ENCODE measurements at regions of chr2 and their contacts with region 1.

Region 1: DNA sequence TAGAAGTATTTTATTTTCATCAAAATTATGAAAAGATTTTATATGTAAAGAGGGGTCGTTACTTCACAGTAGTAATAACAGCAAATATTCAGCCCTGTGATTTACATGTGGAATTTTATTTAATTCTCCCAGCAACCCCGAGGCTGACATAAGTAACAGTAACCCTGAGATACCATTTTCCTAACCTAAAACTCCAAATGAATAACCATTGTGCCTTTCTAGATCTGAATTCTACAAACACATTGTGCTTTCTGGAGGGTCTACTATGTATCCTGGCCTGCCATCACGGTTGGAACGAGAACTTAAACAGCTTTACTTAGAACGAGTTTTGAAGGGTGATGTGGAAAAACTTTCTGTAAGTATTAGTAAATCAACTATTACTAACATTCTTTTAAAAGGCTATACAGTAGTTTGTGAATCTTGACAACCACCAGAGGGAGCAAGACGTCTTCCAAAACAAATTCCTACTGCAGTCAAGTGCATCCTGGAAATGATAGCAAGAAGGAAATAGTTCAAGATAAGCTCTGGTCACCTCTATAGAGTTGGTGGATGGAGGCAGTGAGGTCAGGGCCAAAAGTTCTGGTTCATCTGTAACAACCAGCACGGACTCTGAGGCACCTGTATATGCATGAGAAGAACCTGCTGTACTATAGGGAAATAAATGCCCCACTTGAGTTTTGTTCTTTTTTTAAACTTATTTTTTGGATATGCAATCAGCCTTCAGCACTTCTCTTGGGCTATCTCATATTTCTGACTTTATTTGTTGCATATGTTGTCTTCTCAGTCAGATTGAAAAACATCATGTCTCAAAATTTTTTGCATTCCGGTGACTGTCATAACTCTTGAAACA is 37.4 kb downstream of the ACTR2 start:
- DNase-seq: peak in 4 of 14 experiments; percentile 35 to 66 (median 51)
- ATAC-seq: no peak
- H3K4me3 ChIP-seq: no peak overlapping the region
- H3K4me3 Mint-ChIP-seq: no peak overlapping the region
- H3K27ac ChIP-seq: no peak overlapping the region
- H3K27ac Mint-ChIP-seq: peak overlapping the region; percentile 10
- H3K4me1 ChIP-seq: no peaks in the 10 kb centered on the region
- H3K4me1 Mint-ChIP-seq: peaks cover 7% of the 10 kb centered on the region
- H3K27me3 ChIP-seq: no peaks in the 10 kb centered on the region
- H3K27me3 Mint-ChIP-seq: no peaks in the 10 kb centered on the region
- CTCF ChIP-seq: peak; percentile 75

Region 2: DNA sequence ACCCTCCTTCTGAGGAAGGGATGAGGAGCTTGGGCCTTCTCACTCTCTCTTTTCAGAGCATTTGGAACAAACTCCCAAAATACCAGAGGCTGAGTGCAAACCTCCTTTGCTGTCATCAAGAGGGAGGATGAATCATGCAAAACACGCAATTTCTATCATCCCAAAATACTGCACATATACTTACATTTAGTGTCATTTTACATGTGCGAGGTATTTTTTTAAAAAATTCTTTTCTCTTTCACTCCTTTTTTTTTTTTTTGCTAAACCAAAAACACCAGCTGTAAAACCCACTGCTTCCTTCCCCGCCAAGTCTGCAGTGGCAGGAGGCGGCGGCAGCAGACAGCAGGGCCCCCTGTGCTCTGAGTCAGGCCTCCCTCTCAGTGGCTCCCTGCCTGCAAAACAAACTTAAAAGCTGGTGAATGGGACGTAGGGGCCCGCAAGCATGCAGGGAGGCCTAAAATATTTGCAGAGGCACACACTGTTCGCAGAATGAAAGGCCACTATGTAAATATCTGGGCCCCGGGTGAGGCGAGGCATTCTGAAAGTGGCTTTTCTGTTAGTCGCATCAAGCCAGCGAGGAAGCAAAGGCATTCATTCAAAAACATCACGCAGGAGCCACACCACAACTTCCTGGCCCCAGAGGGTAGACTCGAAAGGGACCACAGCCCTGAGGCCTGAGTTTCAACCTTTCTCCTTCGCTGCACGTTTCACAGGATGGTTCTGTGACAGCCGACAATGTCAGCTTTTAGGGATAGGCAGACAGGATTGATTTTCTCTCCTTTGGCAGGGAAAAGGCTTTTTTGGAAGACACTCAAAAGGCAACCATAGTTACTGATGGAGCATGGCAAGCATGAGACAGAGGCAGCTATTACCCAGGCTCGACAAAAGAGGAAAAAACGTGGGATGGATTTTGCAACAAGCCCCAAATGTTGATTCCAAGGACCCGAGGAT is 36.0 kb after region 1 on chr2:
- CTCF ChIA-PET with region 1: no interaction called
- POLR2A ChIA-PET with region 1: interaction called, 4 read pairs
- intact Hi-C with region 1: loop called in 1 of 2 experiments (anchors 5 kb)
- DNase-seq: peak; percentile 40 to 80 (median 70)
- ATAC-seq: peak; percentile 93
- H3K4me3 ChIP-seq: peak overlapping the region; percentile 49
- H3K4me3 Mint-ChIP-seq: peak overlapping the region; percentile 85
- H3K27ac ChIP-seq: peak overlapping the region; percentile 21 to 52
- H3K27ac Mint-ChIP-seq: peak overlapping the region; percentile 90
- H3K4me1 ChIP-seq: peaks cover 27% of the 10 kb centered on the region
- H3K4me1 Mint-ChIP-seq: peaks cover 44% of the 10 kb centered on the region
- H3K27me3 ChIP-seq: no peaks in the 10 kb centered on the region
- H3K27me3 Mint-ChIP-seq: no peaks in the 10 kb centered on the region
- CTCF ChIP-seq: no peak

Region 3: DNA sequence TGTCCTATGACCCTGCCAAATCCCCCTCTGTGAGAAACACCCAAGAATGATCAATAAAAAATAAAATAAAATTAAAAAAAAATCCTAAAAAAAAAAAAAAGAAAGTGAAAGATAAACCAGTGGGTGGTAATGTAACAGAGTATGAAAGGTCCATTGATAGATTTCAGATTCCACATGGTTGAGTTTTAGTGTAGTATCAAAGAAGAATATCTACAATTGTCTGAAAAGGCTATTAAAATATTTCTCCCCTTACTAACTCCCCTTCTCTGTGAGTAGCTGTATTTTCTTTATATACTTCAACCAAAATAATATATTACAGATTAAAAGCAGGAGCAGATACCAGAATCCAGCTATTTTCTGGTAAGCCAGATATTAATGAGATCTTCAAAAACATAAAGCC is 74.6 kb after region 1 on chr2:
- CTCF ChIA-PET with region 1: no interaction called
- POLR2A ChIA-PET with region 1: no interaction called
- intact Hi-C with region 1: no loop called
- DNase-seq: no peak
- ATAC-seq: no peak
- H3K4me3 ChIP-seq: no peak overlapping the region
- H3K4me3 Mint-ChIP-seq: no peak overlapping the region
- H3K27ac ChIP-seq: no peak overlapping the region
- H3K27ac Mint-ChIP-seq: no peak overlapping the region
- H3K4me1 ChIP-seq: no peaks in the 10 kb centered on the region
- H3K4me1 Mint-ChIP-seq: no peaks in the 10 kb centered on the region
- H3K27me3 ChIP-seq: no peaks in the 10 kb centered on the region
- H3K27me3 Mint-ChIP-seq: no peaks in the 10 kb centered on the region
- CTCF ChIP-seq: no peak

Region 4: DNA sequence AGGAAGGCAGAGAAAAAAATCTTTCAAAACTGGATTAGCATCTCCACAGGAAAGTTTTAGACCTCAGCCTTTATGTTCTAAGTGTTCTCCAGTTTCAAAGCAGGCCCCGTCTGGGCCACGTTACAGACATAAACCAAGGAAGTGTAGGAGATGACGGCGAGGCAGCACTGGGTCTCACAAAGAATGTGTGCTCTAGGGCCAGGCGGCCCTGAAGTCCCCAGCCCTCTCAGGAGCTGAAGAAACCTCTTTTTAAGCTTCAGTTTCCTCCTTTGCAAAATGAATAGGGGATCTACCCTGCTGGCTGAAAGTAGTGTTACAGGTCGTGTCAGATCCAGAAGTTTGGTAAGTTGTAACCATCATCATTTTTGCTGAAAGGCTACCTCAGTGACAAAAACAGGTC is 85.6 kb after region 1 on chr2:
- CTCF ChIA-PET with region 1: no interaction called
- POLR2A ChIA-PET with region 1: no interaction called
- intact Hi-C with region 1: loop called in 1 of 2 experiments (anchors 1 kb)
- DNase-seq: peak in 1 of 14 experiments; percentile 14
- ATAC-seq: no peak
- H3K4me3 ChIP-seq: no peak overlapping the region
- H3K4me3 Mint-ChIP-seq: no peak overlapping the region
- H3K27ac ChIP-seq: no peak overlapping the region
- H3K27ac Mint-ChIP-seq: no peak overlapping the region
- H3K4me1 ChIP-seq: no peaks in the 10 kb centered on the region
- H3K4me1 Mint-ChIP-seq: peaks cover 7% of the 10 kb centered on the region
- H3K27me3 ChIP-seq: no peaks in the 10 kb centered on the region
- H3K27me3 Mint-ChIP-seq: no peaks in the 10 kb centered on the region
- CTCF ChIP-seq: no peak

Region 5: DNA sequence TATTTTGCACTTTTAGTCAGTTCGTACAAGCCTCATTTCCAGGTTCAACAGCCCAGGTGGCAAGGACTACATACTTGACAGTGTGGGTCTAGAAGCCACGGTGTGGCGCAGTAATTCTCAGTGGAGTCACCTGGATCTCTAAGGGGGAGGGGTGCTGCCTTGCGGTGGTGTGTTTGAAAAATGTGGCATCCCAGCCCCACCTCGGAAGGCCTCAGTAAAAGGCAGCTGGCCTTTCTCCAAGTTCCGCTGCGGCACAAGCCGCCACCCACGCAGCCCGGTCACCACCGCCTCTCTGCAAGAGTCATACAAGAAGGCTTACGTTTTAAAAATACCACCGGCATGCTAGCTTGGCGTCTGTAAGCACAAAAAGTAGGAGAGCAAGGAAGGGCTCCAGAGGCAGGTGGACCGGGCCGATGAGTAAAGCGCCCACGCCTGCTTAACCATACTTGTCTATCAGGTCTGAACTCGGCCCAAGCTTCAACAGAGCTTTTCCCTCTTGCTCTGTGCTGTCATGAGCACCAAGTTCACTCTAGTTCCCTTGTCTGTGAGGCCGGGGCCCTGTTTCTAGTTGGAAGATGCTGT is 117.8 kb after region 1 on chr2:
- CTCF ChIA-PET with region 1: no interaction called
- POLR2A ChIA-PET with region 1: no interaction called
- intact Hi-C with region 1: loop called in 1 of 2 experiments (anchors 2 kb)
- DNase-seq: peak; percentile 38 to 87 (median 64)
- ATAC-seq: peak; percentile 92
- H3K4me3 ChIP-seq: peak overlapping the region; percentile 20
- H3K4me3 Mint-ChIP-seq: peak overlapping the region; percentile 77
- H3K27ac ChIP-seq: no peak overlapping the region
- H3K27ac Mint-ChIP-seq: peak overlapping the region; percentile 82
- H3K4me1 ChIP-seq: peaks cover 25% of the 10 kb centered on the region
- H3K4me1 Mint-ChIP-seq: peaks cover 22% of the 10 kb centered on the region
- H3K27me3 ChIP-seq: no peaks in the 10 kb centered on the region
- H3K27me3 Mint-ChIP-seq: no peaks in the 10 kb centered on the region
- CTCF ChIP-seq: peak; percentile 39

Region 6: GRCh38 chr2:65432227-65433190 is 167.5 kb after region 1 on chr2 and contains the start of gene SPRED2:
- CTCF ChIA-PET with region 1: no interaction called
- POLR2A ChIA-PET with region 1: no interaction called
- intact Hi-C with region 1: loop called in 1 of 2 experiments (anchors 5 kb)
- DNase-seq: peak in 13 of 14 experiments; percentile 36 to 89 (median 60)
- ATAC-seq: peak; percentile 47
- H3K4me3 ChIP-seq: peak within 1 kb of the TSS; percentile 75
- H3K4me3 Mint-ChIP-seq: peak within 1 kb of the TSS; percentile 94
- H3K27ac ChIP-seq: no peak within 1 kb of the TSS
- H3K27ac Mint-ChIP-seq: peak within 1 kb of the TSS; percentile 42
- H3K4me1 ChIP-seq: peaks cover 49% of the 10 kb centered on the region
- H3K4me1 Mint-ChIP-seq: peaks cover 23% of the 10 kb centered on the region
- H3K27me3 ChIP-seq: peaks cover 29 to 34% of the 10 kb centered on the region in 2 experiments
- H3K27me3 Mint-ChIP-seq: peaks cover 57% of the 10 kb centered on the region
- CTCF ChIP-seq: no peak
- total RNA-seq, gene SPRED2: 2.5 to 2.8 TPM

Region 7: DNA sequence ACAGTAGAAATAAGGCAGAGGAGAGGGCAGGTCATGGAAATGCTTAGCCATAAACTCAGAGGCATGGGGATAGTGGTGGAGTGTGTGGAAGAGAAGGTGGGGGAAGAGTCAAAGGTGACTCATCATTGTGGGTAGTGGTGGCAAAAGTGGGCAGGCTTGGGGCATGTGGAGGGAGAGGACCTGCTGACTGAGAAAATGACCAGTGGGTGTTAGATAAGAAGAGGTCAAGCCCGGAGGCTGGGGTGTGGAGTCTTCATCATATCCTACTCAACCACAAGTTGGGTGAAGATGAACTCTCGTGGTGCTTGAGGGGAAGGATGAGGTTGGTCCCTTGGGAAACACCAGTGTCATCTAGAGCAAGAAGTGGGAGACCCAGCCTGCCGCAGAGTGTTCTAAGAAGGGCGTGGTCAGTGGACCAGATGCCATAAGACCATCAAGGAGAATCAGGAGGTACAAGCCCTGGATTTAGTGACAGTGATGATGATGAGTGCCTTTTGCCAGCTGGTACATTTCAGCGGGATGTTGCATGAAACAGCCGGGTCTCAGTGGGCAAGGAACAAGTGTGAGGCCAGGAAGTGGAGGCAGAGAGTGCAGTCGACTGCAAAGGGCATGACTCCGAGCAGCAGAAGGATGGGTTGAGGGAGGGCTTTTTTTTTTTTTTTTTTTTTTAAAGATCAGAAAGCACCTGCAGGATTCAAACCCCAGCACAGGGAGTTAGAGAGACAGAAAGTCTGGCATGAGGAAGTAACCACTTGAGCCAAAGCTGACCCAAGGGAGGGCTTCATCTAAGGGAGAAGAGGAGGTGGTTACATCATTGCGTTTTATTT is 289.9 kb after region 1 on chr2:
- CTCF ChIA-PET with region 1: no interaction called
- POLR2A ChIA-PET with region 1: no interaction called
- intact Hi-C with region 1: loop called (anchors 2 kb)
- DNase-seq: peak in 1 of 14 experiments; percentile 3
- ATAC-seq: no peak
- H3K4me3 ChIP-seq: no peak overlapping the region
- H3K4me3 Mint-ChIP-seq: no peak overlapping the region
- H3K27ac ChIP-seq: no peak overlapping the region
- H3K27ac Mint-ChIP-seq: no peak overlapping the region
- H3K4me1 ChIP-seq: peaks cover 4% of the 10 kb centered on the region
- H3K4me1 Mint-ChIP-seq: no peaks in the 10 kb centered on the region
- H3K27me3 ChIP-seq: no peaks in the 10 kb centered on the region
- H3K27me3 Mint-ChIP-seq: peaks cover 4% of the 10 kb centered on the region
- CTCF ChIP-seq: no peak

Region 8: DNA sequence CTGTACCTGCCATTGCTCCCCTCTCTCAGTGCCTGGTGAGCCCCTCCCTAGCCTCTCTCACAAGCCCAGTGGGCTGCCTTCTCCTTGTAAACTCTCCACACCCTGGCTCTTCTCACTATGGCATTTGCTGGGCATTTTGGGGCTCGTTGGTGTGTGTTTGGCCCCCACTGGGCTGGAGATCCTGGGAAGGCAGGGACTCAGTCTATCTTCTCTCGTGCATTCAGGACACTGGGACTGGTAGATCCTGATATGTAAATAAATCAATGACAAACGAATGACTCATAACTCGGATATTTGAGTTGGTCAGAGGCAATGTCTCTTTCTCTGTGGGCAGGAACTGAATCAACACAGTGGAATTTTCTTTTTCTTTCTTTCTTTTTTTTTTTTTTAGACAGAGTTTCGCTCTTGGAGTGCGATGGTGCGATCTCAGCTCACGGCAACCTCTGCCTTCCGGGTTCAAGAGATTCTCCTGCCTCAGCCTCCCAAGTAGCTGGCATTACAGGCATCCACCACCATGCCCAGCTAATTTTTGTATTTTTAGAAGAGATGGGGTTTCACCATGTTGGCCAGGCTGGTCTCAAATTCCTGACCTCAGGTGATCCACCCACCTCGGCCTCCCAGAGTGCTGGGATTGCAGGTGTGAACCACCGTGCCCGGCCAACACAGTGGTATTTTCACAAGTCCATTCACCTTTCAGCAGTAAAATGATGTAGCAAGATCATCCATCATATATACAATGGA is 312.0 kb after region 1 on chr2:
- CTCF ChIA-PET with region 1: no interaction called
- POLR2A ChIA-PET with region 1: no interaction called
- intact Hi-C with region 1: loop called (anchors 1 to 5 kb)
- DNase-seq: no peak
- ATAC-seq: no peak
- H3K4me3 ChIP-seq: no peak overlapping the region
- H3K4me3 Mint-ChIP-seq: no peak overlapping the region
- H3K27ac ChIP-seq: no peak overlapping the region
- H3K27ac Mint-ChIP-seq: no peak overlapping the region
- H3K4me1 ChIP-seq: no peaks in the 10 kb centered on the region
- H3K4me1 Mint-ChIP-seq: no peaks in the 10 kb centered on the region
- H3K27me3 ChIP-seq: no peaks in the 10 kb centered on the region
- H3K27me3 Mint-ChIP-seq: peaks cover 18% of the 10 kb centered on the region
- CTCF ChIP-seq: no peak

Measured in CD4-positive, alpha-beta T cell (primary cell).